Thyroid gland (tissue), 4 donors: ENCODE measurements at regions of chr4 and their contacts with region 1.

Region 1: DNA sequence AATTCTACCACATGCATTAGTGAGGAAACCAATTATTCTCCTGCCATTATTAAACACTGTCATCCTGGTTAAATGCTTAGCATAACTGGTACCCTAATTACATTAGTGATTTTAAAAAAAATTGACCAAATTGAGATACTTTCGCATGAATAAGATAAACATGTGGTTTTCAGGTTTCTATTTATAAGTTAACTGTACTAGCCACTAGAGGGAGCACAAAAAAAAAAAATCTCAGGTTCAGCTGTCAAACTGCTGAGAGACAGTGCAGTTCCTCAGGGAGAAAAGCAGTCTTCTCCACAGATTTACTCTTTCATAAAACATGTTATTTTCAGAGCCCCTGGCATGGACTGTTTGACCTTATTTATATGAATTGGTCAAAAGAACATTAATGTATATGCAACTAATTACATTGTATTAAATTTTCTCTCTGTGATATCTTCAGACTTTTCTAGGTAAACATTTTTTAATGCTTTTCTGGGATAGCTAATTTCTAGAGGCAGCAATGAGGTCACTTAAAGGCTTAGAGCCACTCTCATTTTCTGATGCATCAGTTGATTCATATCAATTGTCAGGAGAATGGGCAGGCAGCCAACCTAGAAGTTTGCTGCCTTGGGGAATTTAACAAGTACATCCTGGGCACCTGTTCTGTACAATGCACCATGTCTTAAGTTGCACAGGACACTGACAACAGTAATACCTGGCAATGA is 167.5 kb downstream of the CDS1 start:
- DNase-seq: peak in 1 of 2 donors; percentile 24
- H3K4me3 ChIP-seq: no peak overlapping the region
- H3K27ac ChIP-seq: no peak overlapping the region
- H3K4me1 ChIP-seq: no peaks in the 10 kb centered on the region
- H3K27me3 ChIP-seq: no peaks in the 10 kb centered on the region
- CTCF ChIP-seq: peak; percentile 35 to 77 (median 56)
- POLR2A ChIP-seq: no peak

Region 2: DNA sequence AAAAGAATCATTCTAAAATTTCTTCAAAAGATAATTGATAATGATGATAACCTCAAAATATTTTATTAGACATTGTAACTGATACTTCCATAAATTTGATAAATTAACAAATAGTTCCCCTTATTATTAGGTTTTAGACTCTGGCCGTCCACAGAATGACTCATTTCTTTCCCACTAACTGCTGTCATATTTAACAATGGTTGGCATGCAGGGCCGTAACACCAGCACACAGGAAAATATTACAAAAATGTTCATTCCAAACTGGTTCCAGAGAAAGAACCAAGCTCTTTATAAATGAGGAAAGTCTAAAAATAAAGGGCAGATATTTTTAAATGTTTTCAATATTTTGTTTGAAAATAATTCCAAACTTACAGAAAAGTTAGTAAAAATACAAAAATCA is 187.9 kb after region 1 on chr4:
- intact Hi-C with region 1: no loop called
- DNase-seq: no peak
- H3K4me3 ChIP-seq: no peak overlapping the region
- H3K27ac ChIP-seq: peak overlapping the region in 1 of 3 donors; percentile 30
- H3K4me1 ChIP-seq: peaks cover 16 to 23% of the 10 kb centered on the region in 2 donors
- H3K27me3 ChIP-seq: no peaks in the 10 kb centered on the region
- CTCF ChIP-seq: no peak
- POLR2A ChIP-seq: no peak

Region 3: DNA sequence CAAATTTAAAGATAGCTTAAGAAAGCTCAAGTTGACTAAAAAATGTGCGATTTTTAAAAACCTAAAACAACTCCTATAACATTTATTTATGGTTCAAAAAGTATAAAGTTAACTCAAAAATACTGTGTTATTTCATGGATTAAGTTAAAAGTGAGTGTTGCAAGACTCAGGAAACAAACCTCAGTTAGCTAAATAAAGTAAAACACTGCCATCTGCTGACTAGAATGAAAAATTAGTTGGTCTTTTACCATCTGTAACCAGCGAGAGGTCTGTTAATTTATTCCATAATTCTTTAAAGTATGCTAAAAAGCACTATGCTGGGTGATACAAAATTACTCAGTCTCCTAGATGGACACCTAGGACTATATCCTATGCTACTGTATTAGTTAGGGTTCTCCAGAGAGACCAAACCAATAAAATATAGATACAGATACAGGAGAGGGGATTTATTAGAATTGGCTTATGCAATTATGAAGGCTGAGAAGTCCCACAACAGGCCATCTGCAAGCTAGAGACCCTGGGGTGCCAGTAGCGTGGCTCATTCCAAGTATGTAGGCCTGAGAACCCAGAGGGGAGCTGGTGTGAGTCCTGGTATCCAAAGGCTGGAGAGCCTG is 221.0 kb after region 1 on chr4:
- intact Hi-C with region 1: loop called (anchors 5 kb)
- DNase-seq: no peak
- H3K4me3 ChIP-seq: no peak overlapping the region
- H3K27ac ChIP-seq: no peak overlapping the region
- H3K4me1 ChIP-seq: peaks cover 5 to 6% of the 10 kb centered on the region in 2 donors
- H3K27me3 ChIP-seq: no peaks in the 10 kb centered on the region
- CTCF ChIP-seq: peak in 5 of 6 experiments; percentile 20 to 72 (median 54)
- POLR2A ChIP-seq: no peak